PC-9 (cell line): ENCODE measurements at regions of chr2 and their contacts with region 1.

Region 1: GRCh38 chr2:127387655-127388422 is at the start of gene MAP3K2:
- DNase-seq: peak; percentile 82 to 96
- H3K4me3 ChIP-seq: peak within 1 kb of the TSS; percentile 66
- H3K27ac ChIP-seq: peak within 1 kb of the TSS; percentile 81
- H3K4me1 ChIP-seq: peaks cover 42% of the 10 kb centered on the region
- H3K27me3 ChIP-seq: no peaks in the 10 kb centered on the region
- CTCF ChIP-seq: no peak
- total RNA-seq, gene MAP3K2: 75.9 and 81.2 TPM in 2 replicates

Region 2: DNA sequence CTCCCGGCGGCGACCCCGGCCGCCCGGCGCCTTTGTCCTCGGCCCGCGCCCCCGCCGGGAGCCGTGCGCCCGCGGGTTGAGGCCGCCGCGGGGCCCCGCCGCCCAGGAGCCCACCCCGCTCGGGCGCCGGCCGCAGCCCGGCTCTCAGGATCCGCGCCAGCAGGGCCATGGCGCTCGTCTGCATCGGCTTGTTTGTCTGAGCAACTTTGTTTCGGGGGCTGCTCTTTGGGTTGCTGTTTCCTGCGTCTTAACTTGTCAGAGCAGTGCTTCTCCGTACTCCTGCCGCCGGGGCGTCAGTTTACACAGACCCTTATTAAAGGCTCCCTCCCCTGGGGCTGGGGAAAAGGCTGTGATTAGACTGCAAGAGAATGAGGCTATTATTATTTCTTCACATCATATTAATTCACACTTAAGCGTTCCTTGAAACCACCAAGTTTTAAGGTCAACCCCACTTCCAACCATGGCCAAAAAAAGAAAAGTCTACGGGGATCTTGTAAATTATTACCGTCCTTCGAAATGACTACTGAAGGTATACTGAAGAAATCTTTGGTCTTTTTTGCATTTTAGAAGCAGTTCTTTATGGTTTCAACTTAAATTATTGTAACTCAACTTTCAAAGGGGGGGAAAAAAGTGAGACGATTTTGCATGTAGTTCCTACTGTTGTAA is 167.6 kb before region 1 on chr2 and contains the start of gene CYP27C1:
- CTCF ChIA-PET with region 1: no interaction called
- POLR2A ChIA-PET with region 1: interaction called, 14 read pairs
- intact Hi-C with region 1: no loop called
- DNase-seq: peak; percentile 31 to 36
- H3K4me3 ChIP-seq: peak within 1 kb of the TSS; percentile 79
- H3K27ac ChIP-seq: peak within 1 kb of the TSS; percentile 97
- H3K4me1 ChIP-seq: peaks cover 54% of the 10 kb centered on the region
- H3K27me3 ChIP-seq: no peaks in the 10 kb centered on the region
- CTCF ChIP-seq: no peak
- total RNA-seq, gene CYP27C1: 0.94 and 1.6 TPM in 2 replicates

Region 3: GRCh38 chr2:127398239-127398590 is 10.4 kb after region 1 on chr2:
- CTCF ChIA-PET with region 1: interaction called, 3 read pairs
- POLR2A ChIA-PET with region 1: interaction called, 13 read pairs
- intact Hi-C with region 1: loop called (anchors 1 kb)
- DNase-seq: peak; percentile 90 to 94
- H3K4me3 ChIP-seq: no peak overlapping the region
- H3K27ac ChIP-seq: no peak overlapping the region
- H3K4me1 ChIP-seq: peaks cover 60% of the 10 kb centered on the region
- H3K27me3 ChIP-seq: no peaks in the 10 kb centered on the region
- CTCF ChIP-seq: no peak

Region 4: GRCh38 chr2:127408004-127408806 is 20.4 kb after region 1 on chr2:
- CTCF ChIA-PET with region 1: interaction called, 5 read pairs
- POLR2A ChIA-PET with region 1: interaction called, 4 read pairs
- intact Hi-C with region 1: loop called (anchors 2 kb)
- DNase-seq: peak; percentile 78 to 98
- H3K4me3 ChIP-seq: peak overlapping the region; percentile 65
- H3K27ac ChIP-seq: peak overlapping the region; percentile 56
- H3K4me1 ChIP-seq: peaks cover 48% of the 10 kb centered on the region
- H3K27me3 ChIP-seq: no peaks in the 10 kb centered on the region
- CTCF ChIP-seq: no peak